Testis (tissue), 5 donors: ENCODE measurements at regions of chr6 and their contacts with region 1.

Region 1: DNA sequence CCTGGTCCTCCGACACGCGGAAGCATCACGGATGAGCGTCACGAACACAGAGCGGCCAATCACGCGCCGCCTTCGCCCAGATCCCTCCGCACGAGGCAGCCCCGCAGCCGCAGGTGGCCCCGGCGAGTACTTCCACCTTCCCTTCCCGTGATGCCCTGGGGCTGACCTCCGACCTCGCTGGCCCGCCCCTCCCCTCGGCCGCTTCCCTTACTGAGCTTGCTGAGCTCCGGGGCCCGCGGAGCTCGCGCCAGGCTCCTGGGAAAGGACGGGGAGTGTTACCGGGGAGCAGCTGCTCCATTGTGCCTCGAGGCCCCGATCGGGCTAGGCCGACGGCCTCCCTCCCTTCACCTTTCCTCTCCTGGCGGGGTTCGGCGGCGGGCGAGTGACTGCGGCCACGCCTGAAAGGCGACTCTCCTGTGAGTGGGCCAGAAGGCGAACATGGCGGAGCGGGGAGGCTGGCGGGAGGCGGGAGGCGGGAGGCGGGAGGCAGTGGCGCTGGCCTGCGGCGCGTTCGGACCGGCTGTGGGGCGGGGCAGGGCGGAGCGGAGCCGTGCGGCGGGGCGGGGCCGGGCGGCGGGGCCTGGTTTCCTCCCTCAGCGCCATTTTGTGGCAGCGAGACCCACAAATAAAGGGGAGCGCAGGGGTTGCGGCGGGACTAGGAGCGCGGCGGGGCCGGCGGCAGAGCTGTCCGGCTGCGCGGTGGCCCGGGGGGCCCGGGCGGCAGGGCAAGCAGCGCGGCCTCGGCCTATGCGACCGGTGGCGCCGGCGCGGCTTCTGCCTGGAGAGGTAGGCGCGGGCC is at the start of gene WTAP:
- DNase-seq: peak; percentile 97
- H3K4me3 ChIP-seq: peak within 1 kb of the TSS; percentile 91 to 97
- H3K27ac ChIP-seq: peak within 1 kb of the TSS; percentile 98 to 99
- H3K4me1 ChIP-seq: peaks cover 20% of the 10 kb centered on the region
- H3K27me3 ChIP-seq: no peaks in the 10 kb centered on the region
- CTCF ChIP-seq: peak in 1 of 3 experiments; percentile 18
- POLR2A ChIP-seq: peak; percentile 63
- total RNA-seq, gene WTAP: 88.0 to 91.2 TPM

Region 2: DNA sequence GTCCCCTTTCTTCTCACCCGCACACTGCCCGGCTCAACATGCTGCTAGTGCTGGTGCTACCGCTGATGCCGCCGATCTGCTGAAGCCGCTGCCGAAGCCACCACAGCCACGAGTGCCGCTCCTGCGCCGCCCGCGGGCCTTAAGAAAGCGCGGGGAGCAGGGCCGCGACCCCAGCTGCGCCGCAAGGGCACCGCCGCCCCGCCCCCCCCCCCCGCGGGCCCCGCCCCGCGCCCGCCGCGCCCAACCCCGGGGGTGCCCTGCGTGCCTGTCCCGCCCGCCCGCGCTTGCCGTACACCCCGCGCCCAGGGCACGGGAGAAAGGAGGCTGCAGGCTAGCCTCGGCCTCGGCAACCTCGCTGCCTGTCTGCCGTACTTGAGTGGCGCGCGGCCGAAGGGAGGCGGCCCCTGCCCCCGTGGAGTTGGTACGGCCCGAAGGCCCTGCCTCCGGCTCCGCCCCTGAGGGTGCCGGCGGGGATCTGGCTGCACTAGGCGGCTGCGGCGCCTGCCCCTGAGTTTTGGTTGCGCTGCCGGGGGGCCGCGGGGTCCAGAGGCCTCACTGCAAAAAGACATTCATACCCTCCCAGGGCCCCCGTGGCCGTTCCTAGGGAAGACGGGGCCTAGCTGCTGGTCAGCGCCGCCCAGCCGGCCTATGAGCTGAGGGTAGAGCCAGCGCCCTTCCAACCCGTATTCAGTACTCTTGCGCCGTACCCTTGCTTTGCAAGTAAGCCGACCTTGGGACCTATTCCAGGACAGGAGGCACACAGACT is 33.8 kb before region 1 on chr6 and contains the start of gene SOD2:
- intact Hi-C with region 1: loop called (anchors 5 kb)
- DNase-seq: peak; percentile 87
- H3K4me3 ChIP-seq: peak within 1 kb of the TSS; percentile 93 to 94
- H3K27ac ChIP-seq: peak within 1 kb of the TSS; percentile 93 to 98
- H3K4me1 ChIP-seq: peaks cover 9% of the 10 kb centered on the region
- H3K27me3 ChIP-seq: no peaks in the 10 kb centered on the region
- CTCF ChIP-seq: no peak
- POLR2A ChIP-seq: peak; percentile 44
- total RNA-seq, gene SOD2: 56.5 to 98.5 TPM

Region 3: GRCh38 chr6:159761873-159762680 is 35.0 kb after region 1 on chr6 and contains the start of gene ACAT2:
- intact Hi-C with region 1: loop called (anchors 2 kb)
- DNase-seq: peak; percentile 98
- H3K4me3 ChIP-seq: peak within 1 kb of the TSS; percentile 68 to 95
- H3K27ac ChIP-seq: peak within 1 kb of the TSS; percentile 89 to 98
- H3K4me1 ChIP-seq: peaks cover 15% of the 10 kb centered on the region
- H3K27me3 ChIP-seq: no peaks in the 10 kb centered on the region
- CTCF ChIP-seq: peak in 1 of 3 experiments; percentile 27
- POLR2A ChIP-seq: no peak
- total RNA-seq, gene ACAT2: 15.8 to 17.1 TPM